AG04450 (cell line): ENCODE measurements at regions of chr6 and their contacts with region 1.

Region 1: GRCh38 chr6:161370880-161371279 is 97.0 kb upstream of the AGPAT4 start:
- DNase-seq: peak; percentile 42
- H3K4me3 ChIP-seq: no peak overlapping the region
- H3K27ac ChIP-seq: no peak overlapping the region
- H3K27me3 ChIP-seq: no peaks in the 10 kb centered on the region
- CTCF ChIP-seq: peak; percentile 96

Region 2: GRCh38 chr6:160930547-160931377 is 440.1 kb before region 1 on chr6:
- CTCF ChIA-PET with region 1: interaction called, 212 read pairs
- POLR2A ChIA-PET with region 1: no interaction called
- DNase-seq: peak; percentile 52
- H3K4me3 ChIP-seq: peak overlapping the region; percentile 54
- H3K27ac ChIP-seq: no peak overlapping the region
- H3K27me3 ChIP-seq: no peaks in the 10 kb centered on the region
- CTCF ChIP-seq: peak; percentile 82

Region 3: DNA sequence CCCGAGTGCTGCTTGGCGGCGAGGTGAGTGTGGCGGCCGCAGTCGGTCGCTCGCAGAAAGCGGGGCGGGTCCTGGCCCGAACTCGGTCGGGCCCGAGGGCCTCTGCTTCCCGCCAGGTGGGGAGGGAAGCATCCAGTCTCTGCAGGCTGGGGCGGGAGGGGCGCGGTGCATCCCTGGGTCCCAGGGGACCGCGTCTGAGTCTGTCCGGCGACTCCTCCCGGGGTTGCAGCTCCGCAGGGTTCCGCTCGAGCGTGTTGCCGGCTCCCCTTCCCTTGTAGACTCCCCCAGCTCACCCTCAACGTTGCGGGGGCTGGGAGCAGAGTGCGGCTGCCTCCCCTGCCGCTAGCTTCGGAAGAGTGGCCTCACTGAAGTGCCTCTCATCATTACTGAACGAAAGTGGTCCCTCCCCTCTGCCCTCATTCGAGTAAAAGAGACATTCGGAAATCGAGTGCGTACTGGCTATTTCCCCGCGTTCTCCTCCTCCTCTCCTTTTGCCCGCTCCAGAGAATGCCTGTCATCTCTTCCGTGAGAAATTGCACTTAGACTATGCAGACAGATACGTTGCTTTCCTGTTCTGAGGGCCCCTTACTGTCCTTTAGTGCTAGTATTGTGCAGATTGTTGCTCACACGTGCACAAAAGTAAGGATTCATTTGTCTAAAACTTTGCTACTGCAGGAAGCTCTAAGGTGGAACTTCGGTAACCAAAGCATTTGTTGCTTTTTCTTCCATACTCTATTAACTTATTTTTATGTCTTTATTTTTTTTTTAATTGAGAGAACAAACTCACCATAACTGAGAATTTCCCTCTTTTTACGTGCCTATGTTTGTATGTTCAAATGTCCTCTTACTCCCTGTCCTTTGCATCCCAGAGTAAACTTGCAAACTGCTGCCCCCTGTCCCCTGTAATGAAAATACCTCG is 378.6 kb before region 1 on chr6:
- CTCF ChIA-PET with region 1: interaction called, 99 read pairs
- POLR2A ChIA-PET with region 1: interaction called, 5 read pairs
- DNase-seq: no peak
- H3K4me3 ChIP-seq: peak overlapping the region; percentile 84
- H3K27ac ChIP-seq: peak overlapping the region; percentile 75
- H3K27me3 ChIP-seq: no peaks in the 10 kb centered on the region
- CTCF ChIP-seq: peak; percentile 84

Region 4: GRCh38 chr6:161076181-161076677 is 294.7 kb before region 1 on chr6:
- CTCF ChIA-PET with region 1: interaction called, 10 read pairs
- POLR2A ChIA-PET with region 1: no interaction called
- DNase-seq: no peak
- H3K4me3 ChIP-seq: no peak overlapping the region
- H3K27ac ChIP-seq: no peak overlapping the region
- H3K27me3 ChIP-seq: no peaks in the 10 kb centered on the region
- CTCF ChIP-seq: no peak

Region 5: GRCh38 chr6:161139766-161140553 is 230.9 kb before region 1 on chr6:
- CTCF ChIA-PET with region 1: interaction called, 11 read pairs
- POLR2A ChIA-PET with region 1: no interaction called
- DNase-seq: no peak
- H3K4me3 ChIP-seq: no peak overlapping the region
- H3K27ac ChIP-seq: no peak overlapping the region
- H3K27me3 ChIP-seq: no peaks in the 10 kb centered on the region
- CTCF ChIP-seq: no peak

Region 6: GRCh38 chr6:161215193-161215592 is 155.7 kb before region 1 on chr6:
- CTCF ChIA-PET with region 1: interaction called, 12 read pairs
- POLR2A ChIA-PET with region 1: no interaction called
- DNase-seq: peak; percentile 99
- H3K4me3 ChIP-seq: no peak overlapping the region
- H3K27ac ChIP-seq: peak overlapping the region; percentile 89
- H3K27me3 ChIP-seq: no peaks in the 10 kb centered on the region
- CTCF ChIP-seq: no peak

Region 7: DNA sequence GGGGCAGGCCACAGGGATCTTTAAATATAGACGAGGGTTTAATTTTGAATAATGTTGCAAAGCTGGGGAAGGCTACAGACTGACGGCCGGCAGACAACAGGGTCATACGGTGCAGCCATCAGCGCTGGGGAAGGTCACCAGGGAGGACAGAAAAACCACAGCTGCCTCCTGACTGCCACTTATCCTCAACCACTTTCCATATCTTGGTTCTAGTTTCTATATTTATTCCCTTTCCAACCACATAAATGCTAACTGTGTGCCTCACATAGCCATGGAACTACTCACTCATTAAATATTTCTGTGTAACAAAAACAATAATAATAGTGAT is 11.3 kb before region 1 on chr6:
- CTCF ChIA-PET with region 1: interaction called, 15 read pairs
- POLR2A ChIA-PET with region 1: no interaction called
- DNase-seq: no peak
- H3K4me3 ChIP-seq: no peak overlapping the region
- H3K27ac ChIP-seq: no peak overlapping the region
- H3K27me3 ChIP-seq: no peaks in the 10 kb centered on the region
- CTCF ChIP-seq: no peak